ENCODE measurements at regions of chr9 and their contacts with region 1.

Region 1: DNA sequence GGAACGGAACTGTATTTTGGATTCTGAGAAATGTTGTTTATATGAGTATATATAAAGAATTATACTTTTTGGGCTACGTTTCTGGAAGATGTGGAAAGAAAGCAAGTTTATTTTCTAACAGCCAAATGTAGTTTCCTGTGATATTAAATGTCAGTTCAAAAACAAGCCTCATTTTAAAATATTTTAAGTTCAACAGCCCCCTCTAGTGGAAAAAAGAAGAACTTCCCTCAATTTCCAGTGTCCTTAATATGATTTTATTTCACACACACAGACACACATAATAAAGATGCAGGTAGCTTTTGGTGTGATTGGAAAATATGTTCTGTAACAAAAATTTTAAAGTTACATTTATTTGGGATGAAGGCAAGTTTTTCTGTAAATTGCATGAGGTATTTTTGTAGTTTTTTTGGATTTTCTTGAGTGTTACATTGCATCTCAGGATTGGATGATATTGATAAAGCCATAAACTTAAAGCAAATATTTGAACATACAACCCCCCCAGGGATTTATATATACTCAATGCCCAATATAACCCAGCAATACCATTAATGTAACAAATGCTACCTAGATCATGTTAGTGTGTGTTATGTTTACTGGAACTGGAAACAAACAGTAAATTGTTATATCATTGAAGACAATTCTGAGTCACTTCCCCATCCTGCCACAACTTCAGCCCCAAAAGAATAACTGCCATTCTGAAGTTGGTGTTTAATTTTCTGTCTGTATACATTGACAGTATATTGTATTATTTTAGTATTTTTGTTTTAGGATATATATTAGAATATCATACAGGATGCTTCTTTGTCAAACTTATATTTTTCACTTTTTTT is 54.0 kb downstream of the CCDC171 start:
- DNase-seq: no peak
- ATAC-seq: no peak

Region 2: GRCh38 chr9:15211160-15211814 is 395.6 kb before region 1 on chr9:
- intact Hi-C with region 1: loop called (anchors 10 kb)
- DNase-seq: no peak
- ATAC-seq: peak; percentile 75